Body of pancreas (tissue), 4 donors: ENCODE measurements at regions of chr2 and their contacts with region 1.

Region 1: DNA sequence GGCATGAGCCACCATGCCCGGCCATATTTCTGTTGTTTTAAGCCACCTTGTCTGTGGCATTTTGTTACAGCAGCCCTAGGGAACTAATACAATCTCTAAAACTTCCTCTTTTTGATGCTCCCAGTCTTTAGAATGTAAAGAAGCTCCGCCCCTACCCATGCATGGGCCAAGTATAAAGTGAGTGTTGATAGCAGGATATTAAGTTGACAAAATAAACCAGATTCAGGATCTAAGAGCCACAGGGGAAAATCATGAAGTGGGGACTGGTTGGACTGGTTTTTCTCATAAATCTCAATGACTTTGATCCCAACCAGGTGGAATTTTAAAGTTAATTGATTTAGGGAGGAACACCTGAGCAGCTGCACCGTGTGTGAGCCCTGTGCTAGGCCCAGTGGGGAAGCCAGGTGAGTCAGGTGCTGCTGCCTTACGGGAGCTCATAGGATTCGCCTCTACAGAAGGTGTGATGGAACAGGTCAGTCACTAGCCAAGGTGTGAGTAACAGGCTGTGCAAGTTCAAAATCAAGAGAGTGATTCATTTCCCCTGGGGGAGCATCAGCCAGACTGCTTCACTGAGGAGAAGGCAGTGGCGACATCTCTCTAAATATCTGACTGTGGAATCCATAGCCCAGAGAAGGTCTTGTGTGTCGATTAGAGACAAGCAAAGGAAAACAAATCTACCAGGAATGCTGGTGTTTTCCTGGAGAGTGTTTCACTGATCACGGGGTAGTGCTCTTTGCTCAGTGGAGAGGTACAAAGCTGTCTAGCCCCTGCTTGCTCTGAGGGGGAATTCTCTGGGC is 63.0 kb upstream of the MSH2 start:
- DNase-seq: peak in 2 of 4 donors; percentile 17 to 39
- ATAC-seq: peak; percentile 34
- H3K4me3 ChIP-seq: no peak overlapping the region
- H3K27ac ChIP-seq: peak overlapping the region; percentile 16 to 76 (median 60)
- H3K4me1 ChIP-seq: peaks cover 18% of the 10 kb centered on the region
- H3K27me3 ChIP-seq: no peaks in the 10 kb centered on the region
- CTCF ChIP-seq: no peak
- POLR2A ChIP-seq: no peak

Region 2: DNA sequence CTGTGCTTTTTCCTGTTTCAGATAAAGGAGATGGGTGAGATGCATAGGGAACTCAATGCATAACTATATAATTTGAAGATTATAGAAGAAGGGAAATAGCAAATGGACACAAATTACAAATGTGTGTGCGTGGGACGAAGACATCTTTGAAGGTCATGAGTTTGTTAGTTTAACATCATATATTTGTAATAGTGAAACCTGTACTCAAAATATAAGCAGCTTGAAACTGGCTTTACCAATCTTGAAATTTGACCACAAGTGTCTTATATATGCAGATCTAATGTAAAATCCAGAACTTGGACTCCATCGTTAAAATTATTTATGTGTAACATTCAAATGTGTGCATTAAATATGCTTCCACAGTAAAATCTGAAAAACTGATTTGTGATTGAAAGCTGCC is 46.6 kb after region 1 on chr2:
- intact Hi-C with region 1: loop called (anchors 5 kb)
- DNase-seq: no peak
- ATAC-seq: no peak
- H3K4me3 ChIP-seq: no peak overlapping the region
- H3K27ac ChIP-seq: no peak overlapping the region
- H3K4me1 ChIP-seq: no peaks in the 10 kb centered on the region
- H3K27me3 ChIP-seq: no peaks in the 10 kb centered on the region
- CTCF ChIP-seq: no peak
- POLR2A ChIP-seq: no peak

Region 3: GRCh38 chr2:47767880-47768609 is 428.1 kb after region 1 on chr2:
- intact Hi-C with region 1: loop called (anchors 10 kb)
- DNase-seq: peak; percentile 64 to 75 (median 68)
- ATAC-seq: peak; percentile 74
- H3K4me3 ChIP-seq: no peak overlapping the region
- H3K27ac ChIP-seq: no peak overlapping the region
- H3K4me1 ChIP-seq: peaks cover 4% of the 10 kb centered on the region
- H3K27me3 ChIP-seq: no peaks in the 10 kb centered on the region
- CTCF ChIP-seq: peak; percentile 87 to 98 (median 92)
- POLR2A ChIP-seq: no peak